Psoas muscle (tissue), 8 donors: ENCODE measurements at regions of chr3 and their contacts with region 1.

Region 1: DNA sequence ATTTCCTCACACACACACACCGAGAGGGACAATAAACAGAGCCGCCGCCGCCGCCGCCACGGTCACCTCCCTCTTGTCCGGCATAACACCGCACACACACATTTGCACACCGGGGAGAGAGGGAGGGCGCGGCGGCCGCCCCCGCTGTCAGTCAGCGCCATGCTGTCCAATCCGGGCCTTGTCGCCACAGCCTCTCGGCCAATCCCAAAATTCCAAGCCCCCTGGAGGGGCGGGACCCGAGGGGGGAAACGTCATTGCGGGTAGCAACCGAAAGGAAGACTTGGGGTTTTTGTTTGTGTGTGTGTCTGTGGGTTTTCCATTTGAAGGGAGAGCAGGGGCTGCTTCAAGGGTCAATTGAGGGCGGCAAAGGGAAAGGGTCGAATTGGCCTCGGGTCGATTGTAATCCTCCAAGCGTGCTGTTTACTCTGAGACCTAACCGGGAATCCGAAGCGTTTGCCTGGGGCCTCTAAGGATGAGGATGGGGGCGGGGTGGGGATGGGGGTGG is at the start of gene TOP2B:
- DNase-seq: peak; percentile 96 to 98
- ATAC-seq: peak; percentile 98 to 100 (median 99)
- H3K4me3 ChIP-seq: peak within 1 kb of the TSS; percentile 83
- H3K27ac ChIP-seq: peak within 1 kb of the TSS; percentile 96
- H3K4me1 ChIP-seq: peaks cover 35% of the 10 kb centered on the region
- H3K27me3 ChIP-seq: no peaks in the 10 kb centered on the region
- CTCF ChIP-seq: no peak
- total RNA-seq, gene TOP2B: 50.6 to 84.8 (median 70.1) TPM

Region 2: GRCh38 chr3:25594007-25594502 is 70.8 kb before region 1 on chr3:
- intact Hi-C with region 1: no loop called
- DNase-seq: no peak
- ATAC-seq: peak; percentile 33 to 71 (median 46)
- H3K4me3 ChIP-seq: no peak overlapping the region
- H3K27ac ChIP-seq: peak overlapping the region; percentile 60
- H3K4me1 ChIP-seq: peaks cover 17% of the 10 kb centered on the region
- H3K27me3 ChIP-seq: no peaks in the 10 kb centered on the region
- CTCF ChIP-seq: peak; percentile 86

Region 3: GRCh38 chr3:25633919-25634318 is 30.9 kb before region 1 on chr3:
- intact Hi-C with region 1: no loop called
- DNase-seq: no peak
- ATAC-seq: no peak
- H3K4me3 ChIP-seq: no peak overlapping the region
- H3K27ac ChIP-seq: no peak overlapping the region
- H3K4me1 ChIP-seq: no peaks in the 10 kb centered on the region
- H3K27me3 ChIP-seq: no peaks in the 10 kb centered on the region
- CTCF ChIP-seq: no peak

Region 4: DNA sequence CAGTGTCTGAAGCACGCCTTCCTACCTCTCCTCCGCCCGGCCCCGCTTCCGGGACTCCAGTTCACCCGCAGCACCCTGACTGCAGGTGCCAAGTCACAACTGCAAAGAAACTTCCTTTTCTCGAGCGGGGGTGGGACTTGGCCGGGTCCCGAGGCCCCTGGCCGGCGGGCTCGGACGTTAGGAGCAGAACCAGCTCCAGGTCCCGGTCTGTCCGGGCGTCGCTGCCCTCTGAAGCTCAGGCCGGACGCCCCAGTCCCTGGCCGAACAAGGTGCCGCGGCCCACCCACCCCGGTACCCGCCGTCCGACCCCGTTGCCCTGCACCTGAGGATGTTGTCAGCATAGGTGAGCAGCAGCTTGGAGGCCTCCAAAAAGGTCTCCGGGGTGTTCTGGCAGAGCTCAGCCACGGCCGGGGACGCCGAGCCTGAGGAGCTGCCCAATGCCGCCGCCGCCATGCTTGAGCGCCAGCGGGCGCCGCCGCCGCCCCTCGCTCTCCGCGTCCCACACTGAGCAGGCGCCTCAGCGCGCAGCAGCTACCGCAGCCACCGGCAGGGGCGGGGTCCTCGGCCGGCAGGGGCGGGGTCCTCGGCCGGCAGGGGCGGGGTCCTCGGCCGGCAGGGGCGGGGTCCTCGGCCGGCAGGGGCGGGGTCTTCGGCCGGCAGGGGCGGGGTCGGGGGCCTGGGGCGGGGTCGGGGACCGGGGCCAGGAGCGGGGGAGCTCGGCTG is 118.2 kb after region 1 on chr3 and contains the start of gene NGLY1:
- intact Hi-C with region 1: loop called (anchors 2 to 5 kb)
- DNase-seq: peak; percentile 87 to 93
- ATAC-seq: peak; percentile 94 to 96 (median 95)
- H3K4me3 ChIP-seq: peak within 1 kb of the TSS; percentile 93
- H3K27ac ChIP-seq: peak within 1 kb of the TSS; percentile 96
- H3K4me1 ChIP-seq: peaks cover 19% of the 10 kb centered on the region
- H3K27me3 ChIP-seq: no peaks in the 10 kb centered on the region
- CTCF ChIP-seq: peak; percentile 10
- total RNA-seq, gene NGLY1: 37.5 to 73.0 (median 53.2) TPM

Region 5: GRCh38 chr3:25945836-25946235 is 281.0 kb after region 1 on chr3:
- intact Hi-C with region 1: no loop called
- DNase-seq: no peak
- ATAC-seq: no peak
- H3K4me3 ChIP-seq: no peak overlapping the region
- H3K27ac ChIP-seq: no peak overlapping the region
- H3K4me1 ChIP-seq: no peaks in the 10 kb centered on the region
- H3K27me3 ChIP-seq: no peaks in the 10 kb centered on the region
- CTCF ChIP-seq: no peak